Caco-2 (cell line): ENCODE measurements at regions of chr1 and their contacts with region 1.

Region 1: GRCh38 chr1:85607126-85607912 is 26.8 kb downstream of the CCN1 start:
- DNase-seq: peak; percentile 79 to 90
- H3K4me3 ChIP-seq: no peak overlapping the region
- H3K4me3 Mint-ChIP-seq: peak overlapping the region; percentile 68
- H3K27ac Mint-ChIP-seq: peak overlapping the region; percentile 95
- H3K4me1 ChIP-seq: peaks cover 66% of the 10 kb centered on the region
- H3K4me1 Mint-ChIP-seq: peaks cover 72% of the 10 kb centered on the region
- H3K27me3 ChIP-seq: no peaks in the 10 kb centered on the region
- H3K27me3 Mint-ChIP-seq: no peaks in the 10 kb centered on the region
- CTCF ChIP-seq: no peak

Region 2: GRCh38 chr1:85328713-85329376 is 278.5 kb before region 1 on chr1:
- CTCF ChIA-PET with region 1: no interaction called
- POLR2A ChIA-PET with region 1: no interaction called
- intact Hi-C with region 1: loop called (anchors 1 kb)
- DNase-seq: peak; percentile 70 to 74
- H3K4me3 ChIP-seq: no peak overlapping the region
- H3K4me3 Mint-ChIP-seq: peak overlapping the region; percentile 31
- H3K27ac Mint-ChIP-seq: peak overlapping the region; percentile 89
- H3K4me1 ChIP-seq: peaks cover 58% of the 10 kb centered on the region
- H3K4me1 Mint-ChIP-seq: peaks cover 33% of the 10 kb centered on the region
- H3K27me3 ChIP-seq: no peaks in the 10 kb centered on the region
- H3K27me3 Mint-ChIP-seq: no peaks in the 10 kb centered on the region
- CTCF ChIP-seq: no peak

Region 3: DNA sequence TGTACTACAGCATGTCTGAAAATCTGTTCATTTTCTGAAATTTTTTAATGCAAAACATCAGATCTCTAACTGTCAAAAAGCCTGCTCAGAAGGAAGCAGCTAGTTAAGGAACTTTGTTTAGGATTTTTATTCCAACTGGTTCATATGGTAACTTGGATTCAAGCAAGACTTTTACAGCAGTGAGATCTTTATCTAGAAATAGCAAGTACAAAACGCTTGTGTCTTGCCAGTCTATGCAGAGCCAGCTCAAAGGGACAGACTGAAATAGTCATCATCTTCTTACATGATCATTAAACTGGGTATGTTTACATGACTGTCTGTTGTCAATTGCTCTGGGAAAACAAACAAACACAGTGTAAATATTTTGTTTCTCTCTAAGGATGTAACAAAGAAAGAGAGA is 180.0 kb before region 1 on chr1:
- CTCF ChIA-PET with region 1: no interaction called
- POLR2A ChIA-PET with region 1: no interaction called
- intact Hi-C with region 1: no loop called
- DNase-seq: no peak
- H3K4me3 ChIP-seq: no peak overlapping the region
- H3K4me3 Mint-ChIP-seq: no peak overlapping the region
- H3K27ac Mint-ChIP-seq: no peak overlapping the region
- H3K4me1 ChIP-seq: no peaks in the 10 kb centered on the region
- H3K4me1 Mint-ChIP-seq: peaks cover 6% of the 10 kb centered on the region
- H3K27me3 ChIP-seq: no peaks in the 10 kb centered on the region
- H3K27me3 Mint-ChIP-seq: no peaks in the 10 kb centered on the region
- CTCF ChIP-seq: no peak

Region 4: DNA sequence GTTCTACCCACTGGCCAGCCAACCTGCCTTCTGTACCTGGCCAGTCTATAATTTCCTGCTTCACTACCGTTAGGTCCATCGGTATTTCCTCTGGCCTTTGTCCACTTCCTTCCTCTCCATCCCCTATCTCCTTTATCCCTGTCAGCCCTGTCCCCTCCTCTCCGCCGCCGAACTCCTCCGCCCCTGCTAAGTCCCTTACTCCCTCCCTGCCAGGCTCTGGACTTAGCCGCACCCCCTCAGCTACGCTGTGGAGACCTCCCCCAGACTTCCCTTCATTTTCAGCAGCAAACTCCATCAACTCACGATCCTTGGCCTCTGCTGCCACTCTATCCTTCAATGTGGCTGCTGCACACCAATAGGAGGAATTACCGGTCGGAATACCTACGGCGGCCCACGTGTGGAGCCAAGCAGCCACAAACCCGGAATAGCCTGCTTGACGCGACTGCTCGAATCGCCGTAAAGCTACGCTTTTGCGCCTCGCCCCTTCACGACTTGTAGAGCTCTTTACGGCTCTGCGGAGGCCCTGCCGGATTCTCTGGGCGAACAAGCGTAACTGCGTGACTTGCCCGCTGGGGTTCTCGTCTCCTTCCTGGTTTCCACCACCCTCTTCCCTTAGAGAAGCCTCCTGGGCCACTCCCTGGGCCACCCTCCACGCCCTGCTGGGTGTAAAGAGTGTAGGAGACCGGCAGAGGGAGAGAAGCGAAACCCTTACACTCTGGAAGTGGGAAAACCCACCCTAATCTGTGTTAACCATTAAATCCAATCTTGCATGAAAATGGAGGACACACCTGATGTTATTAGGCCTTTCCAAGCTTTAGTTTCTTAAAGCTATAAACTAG is 100.9 kb after region 1 on chr1 and contains the start of gene ZNHIT6:
- CTCF ChIA-PET with region 1: no interaction called
- POLR2A ChIA-PET with region 1: interaction called, 5 read pairs
- intact Hi-C with region 1: loop called (anchors 5 kb)
- DNase-seq: peak; percentile 91 to 96
- H3K4me3 ChIP-seq: peak within 1 kb of the TSS; percentile 82
- H3K4me3 Mint-ChIP-seq: no peak within 1 kb of the TSS
- H3K27ac Mint-ChIP-seq: no peak within 1 kb of the TSS
- H3K4me1 ChIP-seq: no peaks in the 10 kb centered on the region
- H3K4me1 Mint-ChIP-seq: no peaks in the 10 kb centered on the region
- H3K27me3 ChIP-seq: no peaks in the 10 kb centered on the region
- H3K27me3 Mint-ChIP-seq: no peaks in the 10 kb centered on the region
- CTCF ChIP-seq: peak; percentile 39 to 50
- total RNA-seq, gene ZNHIT6: 13.9 and 16.1 TPM in 2 replicates